K562 (cell line): ENCODE measurements at regions of chr10 and their contacts with region 1.

Region 1: DNA sequence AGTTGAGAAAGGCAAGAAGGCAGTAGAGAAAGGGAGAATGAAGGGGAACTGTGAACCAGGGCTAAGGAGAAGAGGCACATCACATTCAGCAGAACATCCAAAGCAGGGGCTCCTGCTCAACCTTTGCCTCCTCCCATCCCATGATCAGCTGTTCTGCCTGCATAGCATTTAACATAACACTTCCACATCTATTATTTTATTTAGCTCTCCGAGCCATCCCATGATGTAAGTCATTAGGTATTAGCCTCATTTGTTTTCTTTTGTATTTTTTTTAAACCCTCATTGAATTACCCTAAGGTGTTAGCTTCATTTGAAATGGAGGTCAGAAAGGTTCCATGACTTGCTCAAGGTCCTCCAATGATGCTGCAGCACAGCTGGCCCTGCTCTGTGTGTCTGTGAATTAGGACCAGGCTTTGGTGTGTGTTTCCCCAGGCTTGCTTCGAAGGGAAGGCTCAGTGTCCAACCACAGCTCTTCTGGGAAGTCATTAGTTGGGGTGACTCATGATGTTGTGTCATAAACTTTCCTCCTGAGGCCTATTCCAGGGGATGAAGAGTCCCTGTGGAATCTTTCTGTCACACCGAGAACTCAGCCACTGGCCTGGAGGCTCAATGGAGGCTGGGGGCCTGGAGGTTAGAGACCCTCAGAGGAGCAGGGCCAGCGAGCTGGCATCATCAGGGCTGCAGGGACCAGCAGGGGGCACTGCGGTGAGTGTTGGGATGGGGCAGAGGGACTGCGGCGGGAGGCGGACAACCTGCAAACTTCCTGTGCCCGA is 16.5 kb downstream of the NPFFR1 start:
- DNase-seq: peak; percentile 33 to 43 (median 36)
- ATAC-seq: peak; percentile 67
- H3K4me3 ChIP-seq: no peak overlapping the region
- H3K27ac ChIP-seq: no peak overlapping the region
- H3K4me1 ChIP-seq: peaks cover 0 to 5% of the 10 kb centered on the region in 2 experiments; a peak in 2 of 5 replicates
- H3K27me3 ChIP-seq: peaks cover 22 to 52% of the 10 kb centered on the region in 2 experiments
- CTCF ChIP-seq: peak; percentile 41 to 70 (median 52); a peak in 5 of 6 replicates
- EP300 ChIP-seq: no peak
- POLR2A ChIP-seq: no peak
- RAD21 ChIP-seq: peak in 1 of 2 experiments; percentile 44; a peak in 2 of 4 replicates

Region 2: GRCh38 chr10:70254778-70255328 is 12.5 kb before region 1 on chr10:
- CTCF ChIA-PET with region 1: no interaction called
- POLR2A ChIA-PET with region 1: interaction called, 15 read pairs
- in situ Hi-C with region 1: no loop called
- intact Hi-C with region 1: no loop called
- DNase-seq: no peak
- ATAC-seq: no peak
- H3K4me3 ChIP-seq: no peak overlapping the region
- H3K27ac ChIP-seq: no peak overlapping the region
- H3K4me1 ChIP-seq: peaks cover 0 to 15% of the 10 kb centered on the region in 2 experiments; a peak in 3 of 5 replicates
- H3K27me3 ChIP-seq: peaks cover 40 to 63% of the 10 kb centered on the region in 2 experiments
- CTCF ChIP-seq: no peak
- EP300 ChIP-seq: no peak
- POLR2A ChIP-seq: no peak
- RAD21 ChIP-seq: no peak

Region 3: DNA sequence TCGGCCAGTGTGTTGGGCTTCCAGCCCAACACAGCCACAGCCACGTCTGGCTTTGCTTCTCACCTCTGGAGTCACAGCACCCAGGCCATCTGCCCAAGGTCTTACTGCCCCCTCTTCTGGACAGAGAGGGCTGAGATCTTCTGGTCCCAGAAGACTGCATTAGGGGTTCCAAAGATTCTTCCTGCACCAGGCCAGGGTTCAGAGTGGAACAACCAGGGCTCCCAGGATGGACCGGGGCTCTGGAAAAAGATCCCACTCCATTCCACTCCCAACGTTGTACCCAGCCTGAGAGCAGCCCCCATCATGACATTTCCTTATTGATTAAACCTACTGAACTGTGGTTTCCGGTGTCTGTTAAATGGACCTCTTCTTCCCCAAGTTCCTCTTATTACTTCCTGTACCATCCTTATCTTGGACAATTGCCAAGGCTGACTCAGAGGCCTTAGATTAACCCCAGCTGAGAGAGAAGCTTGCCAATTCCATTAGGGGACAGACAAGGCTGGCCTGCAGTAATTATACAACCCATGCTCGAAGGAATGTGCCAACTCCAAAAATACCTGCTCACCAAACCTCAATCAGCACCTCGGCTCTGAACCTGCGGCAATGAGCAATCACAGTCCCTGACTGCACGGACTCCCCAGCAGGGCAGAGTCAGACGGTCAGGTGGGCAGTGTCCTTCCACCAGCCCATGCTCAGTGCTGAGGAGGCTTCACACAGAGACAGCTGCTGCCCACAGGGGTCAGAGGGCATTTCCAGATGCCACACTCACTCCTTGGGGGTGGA is 64.3 kb after region 1 on chr10:
- CTCF ChIA-PET with region 1: no interaction called
- POLR2A ChIA-PET with region 1: interaction called, 4 read pairs
- in situ Hi-C with region 1: no loop called
- intact Hi-C with region 1: loop called (anchors 1 kb)
- DNase-seq: peak; percentile 84 to 95 (median 87)
- ATAC-seq: peak; percentile 92
- H3K4me3 ChIP-seq: no peak overlapping the region; the same call in 1 of the 2 replicates
- H3K27ac ChIP-seq: peak overlapping the region; percentile 60; the same call in 2 of the 3 replicates
- H3K4me1 ChIP-seq: peaks cover 14 to 23% of the 10 kb centered on the region in 2 experiments
- H3K27me3 ChIP-seq: no peaks in the 10 kb centered on the region
- CTCF ChIP-seq: peak; percentile 70 to 73 (median 73)
- EP300 ChIP-seq: peak; percentile 77
- POLR2A ChIP-seq: no peak
- RAD21 ChIP-seq: peak; percentile 51 to 78

Region 4: GRCh38 chr10:70348228-70348850 is 81.0 kb after region 1 on chr10:
- CTCF ChIA-PET with region 1: interaction called, 6 read pairs
- POLR2A ChIA-PET with region 1: interaction called, 3 read pairs
- in situ Hi-C with region 1: no loop called
- intact Hi-C with region 1: loop called (anchors 5 kb)
- DNase-seq: peak; percentile 81 to 84 (median 82)
- ATAC-seq: peak; percentile 98
- H3K4me3 ChIP-seq: no peak overlapping the region
- H3K27ac ChIP-seq: no peak overlapping the region
- H3K4me1 ChIP-seq: no peaks in the 10 kb centered on the region
- H3K27me3 ChIP-seq: peaks cover 0 to 5% of the 10 kb centered on the region in 2 experiments; a peak in 3 of 5 replicates
- CTCF ChIP-seq: peak; percentile 86 to 90 (median 87)
- EP300 ChIP-seq: no peak; the same call in 1 of the 2 replicates
- POLR2A ChIP-seq: no peak
- RAD21 ChIP-seq: peak; percentile 73 to 92

Region 5: DNA sequence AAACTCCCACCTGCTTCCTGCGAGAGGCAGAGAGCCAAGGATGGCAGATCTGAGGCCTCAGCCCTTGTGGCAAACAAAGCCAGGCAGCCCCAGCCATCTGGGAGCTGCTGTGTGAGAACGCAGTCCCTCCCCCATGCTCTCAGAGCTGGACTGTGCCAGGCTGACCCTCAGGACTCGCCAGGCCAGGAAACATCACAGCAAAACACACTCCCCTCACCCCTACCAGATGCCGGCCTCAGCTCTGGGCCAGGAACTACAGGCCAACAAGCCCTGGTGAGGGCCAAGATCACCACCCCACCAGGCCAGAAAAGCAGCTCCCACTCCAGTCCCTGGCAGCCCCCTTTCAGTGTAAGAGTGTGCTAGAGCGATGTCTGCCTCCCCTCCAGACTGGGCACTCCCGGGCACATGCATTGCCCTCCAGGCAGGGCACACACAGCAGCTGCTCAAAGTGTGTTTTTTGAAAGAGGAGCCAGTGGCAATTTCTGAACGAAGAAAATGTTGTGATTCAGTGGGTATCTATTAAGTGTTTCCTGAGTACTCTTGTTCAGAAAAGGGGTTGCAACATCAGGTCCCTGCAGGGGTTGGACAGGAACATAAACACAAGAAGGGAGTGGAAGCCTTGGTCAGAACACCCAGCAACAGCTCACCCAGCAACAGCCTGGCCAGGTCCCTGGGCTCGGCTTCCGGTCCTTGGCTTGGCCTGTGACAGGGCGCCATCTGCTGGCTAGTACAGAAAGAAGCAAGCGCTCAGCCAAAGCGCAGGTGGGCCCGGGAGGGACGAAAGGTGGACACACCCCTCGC is 96.8 kb after region 1 on chr10:
- CTCF ChIA-PET with region 1: interaction called, 4 read pairs
- POLR2A ChIA-PET with region 1: interaction called, 3 read pairs
- in situ Hi-C with region 1: no loop called
- intact Hi-C with region 1: loop called (anchors 2 kb)
- DNase-seq: peak; percentile 85 to 93 (median 92)
- ATAC-seq: peak; percentile 100
- H3K4me3 ChIP-seq: no peak overlapping the region
- H3K27ac ChIP-seq: no peak overlapping the region
- H3K4me1 ChIP-seq: peaks cover 5 to 12% of the 10 kb centered on the region in 2 experiments; a peak in 4 of 5 replicates
- H3K27me3 ChIP-seq: peaks cover 0 to 4% of the 10 kb centered on the region in 2 experiments; a peak in 1 of 5 replicates
- CTCF ChIP-seq: peak; percentile 97 to 98 (median 97)
- EP300 ChIP-seq: 0 out of 2 replicates have a peak, but pooled peaks have one; percentile 7
- POLR2A ChIP-seq: no peak
- RAD21 ChIP-seq: peak; percentile 99